ENCODE measurements at regions of chr11 and their contacts with region 1.

Region 1: GRCh38 chr11:506238-506994 is 626 bp downstream of the RNH1 start:
- DNase-seq: peak; percentile 98
- ATAC-seq: peak; percentile 70
- H3K4me3 Mint-ChIP-seq: peak overlapping the region; percentile 97
- H3K27ac Mint-ChIP-seq: peak overlapping the region; percentile 99
- H3K4me1 Mint-ChIP-seq: peaks cover 41% of the 10 kb centered on the region
- H3K27me3 Mint-ChIP-seq: no peaks in the 10 kb centered on the region
- CTCF ChIP-seq: no peak

Region 2: GRCh38 chr11:236774-237767 is 269.3 kb before region 1 on chr11 and contains the start of gene PSMD13:
- CTCF ChIA-PET with region 1: no interaction called
- POLR2A ChIA-PET with region 1: interaction called, 7 read pairs
- intact Hi-C with region 1: loop called (anchors 1 kb)
- DNase-seq: peak; percentile 85
- ATAC-seq: peak; percentile 78
- H3K4me3 Mint-ChIP-seq: peak within 1 kb of the TSS; percentile 98
- H3K27ac Mint-ChIP-seq: peak within 1 kb of the TSS; percentile 99
- H3K4me1 Mint-ChIP-seq: peaks cover 41% of the 10 kb centered on the region
- H3K27me3 Mint-ChIP-seq: no peaks in the 10 kb centered on the region
- CTCF ChIP-seq: no peak
- total RNA-seq, gene PSMD13: 147 and 149 TPM in 2 replicates

Region 3: DNA sequence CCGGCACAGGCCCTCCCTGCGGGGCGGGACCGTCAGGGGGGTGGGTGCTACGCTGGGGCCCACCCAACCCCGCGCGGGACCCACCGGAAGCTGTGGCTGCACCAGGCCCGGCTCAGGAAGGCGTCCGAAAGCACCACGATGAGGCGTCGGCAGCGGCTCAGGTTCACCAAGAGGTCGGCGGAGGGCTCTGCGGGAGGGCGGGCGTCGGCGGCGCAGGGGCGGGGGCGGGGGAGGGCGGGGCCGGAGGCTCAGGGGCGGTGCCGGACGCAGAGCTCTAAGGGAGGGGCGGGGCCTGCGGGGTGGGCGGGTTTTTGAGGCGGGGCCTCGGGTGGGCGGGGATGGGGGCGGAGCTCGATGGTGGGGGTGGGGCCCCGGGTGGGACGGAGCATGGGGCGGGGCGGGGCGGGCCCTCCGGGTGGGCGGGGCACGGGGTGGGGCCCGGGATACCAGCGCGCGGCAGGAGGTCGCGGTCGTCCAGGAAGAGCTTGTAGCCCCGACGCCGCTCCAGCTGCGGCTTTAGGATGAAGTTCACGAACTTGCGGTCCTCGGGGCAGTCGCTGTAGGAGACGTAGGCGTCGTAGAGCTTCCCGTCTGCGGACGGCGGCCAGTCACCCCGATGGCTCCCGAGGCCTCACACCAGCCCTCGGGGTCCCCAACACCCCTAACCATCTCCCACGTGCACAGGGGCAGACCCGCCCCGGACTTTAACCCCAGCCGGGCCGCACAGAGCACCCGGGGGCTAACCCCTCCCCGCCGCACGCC is 99.3 kb before region 1 on chr11:
- CTCF ChIA-PET with region 1: no interaction called
- POLR2A ChIA-PET with region 1: interaction called, 13 read pairs
- intact Hi-C with region 1: loop called (anchors 1 kb)
- DNase-seq: peak; percentile 76
- ATAC-seq: peak; percentile 85
- H3K4me3 Mint-ChIP-seq: peak overlapping the region; percentile 60
- H3K27ac Mint-ChIP-seq: peak overlapping the region; percentile 35
- H3K4me1 Mint-ChIP-seq: peaks cover 3% of the 10 kb centered on the region
- H3K27me3 Mint-ChIP-seq: no peaks in the 10 kb centered on the region
- CTCF ChIP-seq: no peak

Region 4: GRCh38 chr11:447923-448731 is 58.3 kb before region 1 on chr11:
- CTCF ChIA-PET with region 1: interaction called, 8 read pairs
- POLR2A ChIA-PET with region 1: interaction called, 34 read pairs
- intact Hi-C with region 1: loop called (anchors 1 kb)
- DNase-seq: peak; percentile 97
- ATAC-seq: peak; percentile 75
- H3K4me3 Mint-ChIP-seq: peak overlapping the region; percentile 94
- H3K27ac Mint-ChIP-seq: peak overlapping the region; percentile 95
- H3K4me1 Mint-ChIP-seq: peaks cover 34% of the 10 kb centered on the region
- H3K27me3 Mint-ChIP-seq: no peaks in the 10 kb centered on the region
- CTCF ChIP-seq: no peak

Region 5: GRCh38 chr11:477052-477715 is 29.2 kb before region 1 on chr11:
- CTCF ChIA-PET with region 1: no interaction called
- POLR2A ChIA-PET with region 1: no interaction called
- intact Hi-C with region 1: no loop called
- DNase-seq: no peak
- ATAC-seq: no peak
- H3K4me3 Mint-ChIP-seq: no peak overlapping the region
- H3K27ac Mint-ChIP-seq: no peak overlapping the region
- H3K4me1 Mint-ChIP-seq: no peaks in the 10 kb centered on the region
- H3K27me3 Mint-ChIP-seq: no peaks in the 10 kb centered on the region
- CTCF ChIP-seq: no peak

Region 6: DNA sequence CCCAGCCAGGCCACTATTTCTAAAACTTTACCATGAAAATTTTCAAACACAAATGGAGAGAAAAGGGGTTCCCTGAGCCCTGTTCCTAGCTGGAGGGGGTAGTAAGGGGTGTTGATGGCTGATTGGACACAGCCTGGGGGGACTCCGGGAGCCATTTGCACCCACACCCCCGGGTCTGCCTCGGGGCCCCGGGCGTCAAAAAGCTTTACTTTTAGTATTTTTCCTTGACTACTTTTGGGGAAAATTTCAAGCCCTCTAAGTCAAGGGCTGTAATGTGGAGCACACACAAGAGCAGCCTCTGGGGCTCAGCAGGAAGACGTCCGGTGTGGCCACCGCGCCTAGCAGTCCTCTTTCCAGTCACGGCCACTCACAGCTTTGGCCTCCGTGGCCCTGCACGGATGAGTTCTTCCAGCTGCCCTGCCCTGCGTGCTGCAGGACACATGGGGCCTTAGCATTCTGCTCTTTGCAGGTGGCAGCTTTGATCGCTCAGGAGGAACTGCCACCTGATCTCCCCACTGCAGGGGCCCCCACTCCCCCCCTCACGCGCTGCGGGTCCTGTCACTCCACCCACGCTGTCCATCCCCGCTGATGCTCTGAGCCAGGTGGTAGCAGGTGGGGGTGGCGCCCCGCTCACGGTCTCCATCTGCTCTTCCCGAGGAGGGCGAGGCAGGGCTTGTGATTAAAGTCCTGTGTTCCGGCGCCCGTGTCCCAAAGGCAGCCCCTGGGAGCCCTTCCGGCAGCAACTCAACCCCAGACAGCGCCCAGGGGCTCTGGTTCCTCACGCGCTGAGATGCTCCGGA is 13.8 kb before region 1 on chr11:
- CTCF ChIA-PET with region 1: no interaction called
- POLR2A ChIA-PET with region 1: no interaction called
- intact Hi-C with region 1: no loop called
- DNase-seq: no peak
- ATAC-seq: no peak
- H3K4me3 Mint-ChIP-seq: no peak overlapping the region
- H3K27ac Mint-ChIP-seq: no peak overlapping the region
- H3K4me1 Mint-ChIP-seq: peaks cover 4% of the 10 kb centered on the region
- H3K27me3 Mint-ChIP-seq: no peaks in the 10 kb centered on the region
- CTCF ChIP-seq: no peak

Region 7: GRCh38 chr11:560305-561147 is 54.1 kb after region 1 on chr11 and contains the starts of genes LMNTD2 and RASSF7:
- CTCF ChIA-PET with region 1: no interaction called
- POLR2A ChIA-PET with region 1: interaction called, 6 read pairs
- intact Hi-C with region 1: loop called (anchors 1 kb)
- DNase-seq: peak; percentile 97
- ATAC-seq: peak; percentile 96
- H3K4me3 Mint-ChIP-seq: peak within 1 kb of the TSS; percentile 84
- H3K27ac Mint-ChIP-seq: peak within 1 kb of the TSS; percentile 59
- H3K4me1 Mint-ChIP-seq: peaks cover 17% of the 10 kb centered on the region
- H3K27me3 Mint-ChIP-seq: no peaks in the 10 kb centered on the region
- CTCF ChIP-seq: no peak
- total RNA-seq, gene LMNTD2: 8.6 and 9.1 TPM in 2 replicates
- total RNA-seq, gene RASSF7: 14.2 and 14.9 TPM in 2 replicates

Region 8: GRCh38 chr11:575996-576768 is 69.8 kb after region 1 on chr11 and contains the start of gene PHRF1:
- CTCF ChIA-PET with region 1: no interaction called
- POLR2A ChIA-PET with region 1: interaction called, 10 read pairs
- intact Hi-C with region 1: loop called (anchors 1 kb)
- DNase-seq: peak; percentile 93
- ATAC-seq: peak; percentile 90
- H3K4me3 Mint-ChIP-seq: peak within 1 kb of the TSS; percentile 97
- H3K27ac Mint-ChIP-seq: peak within 1 kb of the TSS; percentile 100
- H3K4me1 Mint-ChIP-seq: peaks cover 39% of the 10 kb centered on the region
- H3K27me3 Mint-ChIP-seq: peaks cover 10% of the 10 kb centered on the region
- CTCF ChIP-seq: no peak
- total RNA-seq, gene PHRF1: 42.7 and 49.6 TPM in 2 replicates

Region 9: DNA sequence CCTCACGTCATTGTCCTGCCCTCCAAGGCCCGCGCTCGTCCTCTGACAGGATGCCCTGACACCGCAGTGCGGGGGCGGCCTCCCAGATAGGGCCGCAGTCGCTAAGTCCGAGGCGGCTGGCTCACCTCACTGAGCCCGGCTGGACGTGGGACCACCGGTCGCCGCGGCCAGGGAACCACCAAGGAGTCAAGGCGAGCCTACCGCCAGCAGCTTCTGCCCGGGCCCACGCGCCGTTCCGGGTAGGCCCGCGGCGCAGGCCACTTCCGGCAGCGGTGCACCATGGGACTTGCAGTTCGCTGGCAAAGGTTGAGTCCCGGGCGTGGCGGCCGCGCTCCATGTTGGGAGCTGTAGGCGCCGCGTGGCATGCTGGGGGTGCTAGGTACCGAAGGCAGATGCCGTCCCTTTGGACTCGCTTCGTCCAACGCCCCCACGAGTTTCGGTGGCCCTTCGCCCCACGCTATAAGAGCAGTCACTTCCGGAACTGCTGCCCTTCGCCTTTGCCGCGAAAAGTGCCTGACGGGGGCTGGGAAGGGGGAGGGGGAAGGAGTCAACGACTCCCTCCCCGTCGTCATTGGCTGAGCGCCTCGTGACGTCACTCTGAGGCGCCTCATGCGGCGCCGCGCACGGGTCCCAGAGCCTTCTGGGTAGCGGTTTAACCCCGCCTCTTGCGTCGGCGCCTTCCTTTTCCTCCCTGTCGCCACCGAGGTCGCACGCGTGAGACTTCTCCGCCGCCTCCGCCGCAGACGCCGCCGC is 303.0 kb after region 1 on chr11 and contains the start of gene RPLP2:
- CTCF ChIA-PET with region 1: no interaction called
- POLR2A ChIA-PET with region 1: interaction called, 5 read pairs
- intact Hi-C with region 1: loop called (anchors 2 kb)
- DNase-seq: peak; percentile 97
- ATAC-seq: peak; percentile 82
- H3K4me3 Mint-ChIP-seq: peak within 1 kb of the TSS; percentile 91
- H3K27ac Mint-ChIP-seq: peak within 1 kb of the TSS; percentile 98
- H3K4me1 Mint-ChIP-seq: peaks cover 37% of the 10 kb centered on the region
- H3K27me3 Mint-ChIP-seq: no peaks in the 10 kb centered on the region
- CTCF ChIP-seq: no peak
- total RNA-seq, gene RPLP2: 4,124 and 4,449 TPM in 2 replicates

Measured in activated B cell treated with CpG ODN at 0.5 μM for 24 hours (primary cell).